ENCODE measurements at regions of chr3 and their contacts with region 1.

Region 1: GRCh38 chr3:123732473-123733157 is 147.8 kb upstream of the HACD2 start:
- DNase-seq: no peak
- ATAC-seq: no peak
- H3K4me3 ChIP-seq: no peak overlapping the region
- H3K27ac ChIP-seq: no peak overlapping the region
- H3K4me1 ChIP-seq: no peaks in the 10 kb centered on the region
- H3K27me3 ChIP-seq: peaks cover 0 to 3% (median 0%) of the 10 kb centered on the region in 7 donors
- CTCF ChIP-seq: no peak

Region 2: DNA sequence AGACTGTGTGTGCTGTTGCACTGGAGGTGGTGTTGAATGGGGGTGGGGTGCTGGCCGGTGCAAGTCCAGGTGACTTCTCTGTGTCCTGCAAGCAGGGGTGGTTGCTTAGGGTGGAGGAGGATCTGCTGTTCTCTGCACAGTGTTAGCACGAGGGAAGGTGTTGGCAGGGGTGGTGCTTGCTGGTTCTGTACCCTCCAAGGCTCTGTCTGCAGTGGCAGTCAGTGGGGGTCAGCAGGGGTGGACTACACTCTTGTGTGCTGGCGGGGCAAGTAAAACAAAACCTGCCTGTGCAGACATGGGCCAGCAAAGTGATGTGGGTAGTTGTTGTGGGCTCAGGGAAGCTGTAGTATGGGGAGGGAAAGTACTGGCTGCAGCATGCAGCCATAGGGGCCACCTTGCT is 253.8 kb after region 1 on chr3:
- intact Hi-C with region 1: loop called in 1 of 10 experiments (anchors 10 kb)
- DNase-seq: no peak
- ATAC-seq: peak in 1 of 8 donors; percentile 56
- H3K4me3 ChIP-seq: no peak overlapping the region
- H3K27ac ChIP-seq: no peak overlapping the region
- H3K4me1 ChIP-seq: peaks cover 0 to 7% (median 0%) of the 10 kb centered on the region in 9 donors
- H3K27me3 ChIP-seq: peaks cover 0 to 66% (median 10%) of the 10 kb centered on the region in 7 donors
- CTCF ChIP-seq: no peak